Mammary epithelial cell (primary cell): ENCODE measurements at regions of chr22 and their contacts with region 1.

Region 1: DNA sequence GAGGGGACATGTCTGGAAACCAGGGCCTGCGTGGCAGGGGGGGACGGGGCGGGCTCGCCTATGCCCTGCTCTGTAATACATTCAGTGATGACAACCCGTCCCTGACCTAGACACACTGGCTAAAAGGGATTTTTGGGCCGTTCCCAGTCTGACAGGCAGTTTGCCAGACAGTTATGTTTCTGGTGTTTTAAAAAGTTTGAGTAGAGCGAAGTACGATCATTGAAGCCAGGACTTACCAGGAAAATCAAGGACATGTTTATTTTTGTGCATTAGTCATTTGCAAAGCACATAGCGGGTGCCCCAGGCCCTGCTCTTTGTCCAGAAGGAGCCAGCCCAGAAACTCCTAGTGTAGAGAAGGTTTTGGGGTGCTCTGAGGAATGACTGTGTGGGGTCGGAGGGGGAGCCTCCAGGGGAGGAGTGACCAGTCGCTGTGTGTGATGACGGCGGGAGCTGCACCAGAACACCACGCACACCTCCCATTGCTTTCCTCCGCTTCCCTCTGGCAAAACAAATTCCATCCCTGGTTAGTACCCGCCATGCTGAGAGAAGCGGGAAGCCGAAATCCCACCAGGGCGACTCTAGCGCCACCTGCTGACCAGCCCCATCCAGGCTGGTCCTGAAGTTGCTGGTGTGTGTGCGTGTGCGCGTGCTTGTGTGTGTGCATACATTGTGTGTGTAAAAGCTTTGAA is 50.8 kb downstream of the FBLN1 start:
- DNase-seq: peak; percentile 80
- H3K4me3 ChIP-seq: no peak overlapping the region
- H3K27ac ChIP-seq: peak overlapping the region; percentile 49
- H3K4me1 ChIP-seq: peaks cover 43% of the 10 kb centered on the region
- H3K27me3 ChIP-seq: no peaks in the 10 kb centered on the region
- CTCF ChIP-seq: peak; percentile 93 to 99

Region 2: GRCh38 chr22:45268958-45269844 is 284.3 kb before region 1 on chr22:
- CTCF ChIA-PET with region 1: no interaction called
- dilution Hi-C with region 1: loop called (anchors 5 kb)
- in situ Hi-C with region 1: loop called (anchors 5 to 10 kb)
- intact Hi-C with region 1: loop called (anchors 1 kb)
- DNase-seq: peak; percentile 43
- H3K4me3 ChIP-seq: peak overlapping the region; percentile 67 to 82 (median 68)
- H3K27ac ChIP-seq: no peak overlapping the region
- H3K4me1 ChIP-seq: peaks cover 10% of the 10 kb centered on the region
- H3K27me3 ChIP-seq: no peaks in the 10 kb centered on the region
- CTCF ChIP-seq: peak; percentile 63 to 81

Region 3: DNA sequence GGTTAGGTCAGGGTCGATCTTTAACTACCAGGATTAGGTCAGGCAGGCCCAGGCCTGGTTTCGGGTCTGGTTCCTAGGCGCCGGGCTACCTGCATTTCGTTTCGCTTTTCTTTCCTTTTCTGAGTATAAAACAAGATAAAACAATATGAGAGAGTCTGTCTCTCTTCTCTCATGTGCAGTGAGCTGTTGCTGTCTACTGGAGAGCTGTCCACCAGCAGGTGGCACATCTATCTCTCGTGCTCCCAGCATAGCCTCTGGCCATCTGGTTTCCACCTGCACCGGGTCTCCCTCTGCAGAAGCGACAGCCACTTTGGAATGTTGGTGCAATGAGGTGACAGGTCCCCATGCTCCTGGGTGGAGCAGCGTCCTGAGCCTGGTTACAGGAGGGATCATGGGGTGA is 112.4 kb before region 1 on chr22:
- CTCF ChIA-PET with region 1: interaction called, 3 read pairs
- dilution Hi-C with region 1: no loop called
- in situ Hi-C with region 1: loop called in 1 of 2 experiments (anchors 5 kb)
- intact Hi-C with region 1: loop called (anchors 1 kb)
- DNase-seq: peak; percentile 46
- H3K4me3 ChIP-seq: no peak overlapping the region
- H3K27ac ChIP-seq: no peak overlapping the region
- H3K4me1 ChIP-seq: no peaks in the 10 kb centered on the region
- H3K27me3 ChIP-seq: no peaks in the 10 kb centered on the region
- CTCF ChIP-seq: peak; percentile 55 to 79

Region 4: GRCh38 chr22:45469281-45470073 is 84.0 kb before region 1 on chr22:
- CTCF ChIA-PET with region 1: no interaction called
- dilution Hi-C with region 1: loop called (anchors 10 kb)
- in situ Hi-C with region 1: no loop called
- intact Hi-C with region 1: loop called (anchors 1 kb)
- DNase-seq: peak; percentile 78
- H3K4me3 ChIP-seq: peak overlapping the region in 2 of 3 experiments; percentile 1 to 16
- H3K27ac ChIP-seq: peak overlapping the region; percentile 77
- H3K4me1 ChIP-seq: peaks cover 20% of the 10 kb centered on the region
- H3K27me3 ChIP-seq: no peaks in the 10 kb centered on the region
- CTCF ChIP-seq: no peak

Region 5: DNA sequence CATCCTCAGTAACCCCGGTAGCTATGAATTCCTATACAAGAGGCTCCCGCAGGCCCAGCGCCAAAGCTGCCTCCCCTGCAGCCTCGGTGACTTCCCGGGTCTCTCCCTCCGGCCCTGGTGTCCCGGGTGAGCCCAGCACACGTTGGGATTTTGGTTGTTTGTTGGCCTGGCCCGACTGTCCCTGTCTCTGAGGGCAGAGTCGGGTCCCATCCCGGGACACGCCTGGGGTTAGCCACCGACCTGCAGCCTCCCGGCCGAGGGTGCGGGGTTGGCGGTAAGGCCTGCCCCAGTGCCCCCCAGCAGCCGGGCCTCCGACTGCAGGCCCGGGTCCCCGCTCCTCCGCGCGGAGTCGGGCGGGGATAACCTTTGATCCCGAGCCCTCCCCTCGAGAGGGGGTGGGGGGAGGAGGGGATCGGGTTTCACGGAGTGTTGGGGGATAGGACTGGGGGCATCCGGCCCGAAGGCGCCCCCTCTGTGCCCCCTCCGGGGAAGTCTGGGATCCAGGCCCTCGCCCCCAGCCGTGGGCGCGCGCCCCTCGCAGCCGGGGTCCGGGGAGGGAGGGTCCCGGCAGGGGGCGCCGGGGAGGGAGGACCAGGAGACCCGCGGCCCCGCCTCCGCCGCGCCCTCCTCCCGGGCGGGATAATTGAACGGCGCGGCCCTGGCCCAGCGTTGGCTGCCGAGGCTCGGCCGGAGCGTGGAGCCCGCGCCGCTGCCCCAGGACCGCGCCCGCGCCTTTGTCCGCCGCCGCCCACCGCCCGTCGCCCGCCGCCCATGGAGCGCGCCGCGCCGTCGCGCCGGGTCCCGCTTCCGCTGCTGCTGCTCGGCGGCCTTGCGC is 51.1 kb before region 1 on chr22 and contains the start of gene FBLN1:
- CTCF ChIA-PET with region 1: no interaction called
- dilution Hi-C with region 1: no loop called
- in situ Hi-C with region 1: no loop called
- intact Hi-C with region 1: loop called (anchors 1 kb)
- DNase-seq: no peak
- H3K4me3 ChIP-seq: peak within 1 kb of the TSS; percentile 55 to 72 (median 69)
- H3K27ac ChIP-seq: peak within 1 kb of the TSS; percentile 22
- H3K4me1 ChIP-seq: peaks cover 22% of the 10 kb centered on the region
- H3K27me3 ChIP-seq: no peaks in the 10 kb centered on the region
- CTCF ChIP-seq: peak in 1 of 2 donors; percentile 38
- total RNA-seq, gene FBLN1: 130 to 173 TPM

Region 6: DNA sequence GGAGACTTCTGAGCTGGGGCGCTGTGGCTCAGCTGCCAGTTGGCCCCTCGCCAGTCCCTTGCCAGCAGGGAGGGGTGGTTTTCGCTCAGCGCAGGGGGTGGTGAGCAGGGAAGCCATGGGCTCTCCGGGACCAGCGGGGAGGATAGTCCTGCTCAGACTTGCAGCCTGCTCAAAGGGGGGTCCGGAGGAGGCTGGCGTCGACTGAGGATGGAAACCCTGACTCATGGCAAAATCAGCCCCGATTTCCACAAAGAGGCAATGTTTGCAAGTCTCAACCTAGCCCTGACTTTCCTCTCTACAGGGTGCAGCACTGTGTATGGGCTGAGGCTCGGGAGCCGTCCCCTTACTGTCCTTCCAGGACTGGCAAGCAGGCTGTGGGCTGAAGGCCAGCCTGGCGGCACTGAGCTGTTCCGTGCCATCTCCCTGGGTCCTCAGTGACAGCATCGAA is 15.7 kb before region 1 on chr22:
- CTCF ChIA-PET with region 1: no interaction called
- dilution Hi-C with region 1: no loop called
- in situ Hi-C with region 1: no loop called
- intact Hi-C with region 1: loop called (anchors 1 kb)
- DNase-seq: peak; percentile 100
- H3K4me3 ChIP-seq: no peak overlapping the region
- H3K27ac ChIP-seq: peak overlapping the region; percentile 100
- H3K4me1 ChIP-seq: peaks cover 25% of the 10 kb centered on the region
- H3K27me3 ChIP-seq: no peaks in the 10 kb centered on the region
- CTCF ChIP-seq: no peak

Region 7: GRCh38 chr22:45656577-45656976 is 103.1 kb after region 1 on chr22:
- CTCF ChIA-PET with region 1: no interaction called
- dilution Hi-C with region 1: no loop called
- in situ Hi-C with region 1: no loop called
- intact Hi-C with region 1: no loop called
- DNase-seq: no peak
- H3K4me3 ChIP-seq: no peak overlapping the region
- H3K27ac ChIP-seq: no peak overlapping the region
- H3K4me1 ChIP-seq: no peaks in the 10 kb centered on the region
- H3K27me3 ChIP-seq: no peaks in the 10 kb centered on the region
- CTCF ChIP-seq: no peak